Mammary epithelial cell (primary cell): ENCODE measurements at regions of chr1 and their contacts with region 1.

Region 1: GRCh38 chr1:21270086-21270689 is 20.1 kb downstream of the ECE1 start:
- DNase-seq: no peak
- H3K4me3 ChIP-seq: no peak overlapping the region
- H3K27ac ChIP-seq: no peak overlapping the region
- H3K4me1 ChIP-seq: peaks cover 9% of the 10 kb centered on the region
- H3K27me3 ChIP-seq: no peaks in the 10 kb centered on the region
- CTCF ChIP-seq: peak; percentile 93 to 99

Region 2: GRCh38 chr1:21255278-21255942 is 14.8 kb before region 1 on chr1:
- CTCF ChIA-PET with region 1: interaction called, 14 read pairs
- dilution Hi-C with region 1: no loop called
- in situ Hi-C with region 1: no loop called
- intact Hi-C with region 1: no loop called
- DNase-seq: peak; percentile 72
- H3K4me3 ChIP-seq: no peak overlapping the region
- H3K27ac ChIP-seq: no peak overlapping the region
- H3K4me1 ChIP-seq: peaks cover 33% of the 10 kb centered on the region
- H3K27me3 ChIP-seq: no peaks in the 10 kb centered on the region
- CTCF ChIP-seq: peak; percentile 87 to 91

Region 3: GRCh38 chr1:21324368-21325141 is 54.4 kb after region 1 on chr1:
- CTCF ChIA-PET with region 1: interaction called, 5 read pairs
- dilution Hi-C with region 1: loop called (anchors 5 kb)
- in situ Hi-C with region 1: no loop called
- intact Hi-C with region 1: no loop called
- DNase-seq: peak; percentile 96
- H3K4me3 ChIP-seq: no peak overlapping the region
- H3K27ac ChIP-seq: peak overlapping the region; percentile 63
- H3K4me1 ChIP-seq: peaks cover 48% of the 10 kb centered on the region
- H3K27me3 ChIP-seq: no peaks in the 10 kb centered on the region
- CTCF ChIP-seq: no peak